CD14-positive monocyte (primary cell): ENCODE measurements at regions of chr18 and their contacts with region 1.

Region 1: DNA sequence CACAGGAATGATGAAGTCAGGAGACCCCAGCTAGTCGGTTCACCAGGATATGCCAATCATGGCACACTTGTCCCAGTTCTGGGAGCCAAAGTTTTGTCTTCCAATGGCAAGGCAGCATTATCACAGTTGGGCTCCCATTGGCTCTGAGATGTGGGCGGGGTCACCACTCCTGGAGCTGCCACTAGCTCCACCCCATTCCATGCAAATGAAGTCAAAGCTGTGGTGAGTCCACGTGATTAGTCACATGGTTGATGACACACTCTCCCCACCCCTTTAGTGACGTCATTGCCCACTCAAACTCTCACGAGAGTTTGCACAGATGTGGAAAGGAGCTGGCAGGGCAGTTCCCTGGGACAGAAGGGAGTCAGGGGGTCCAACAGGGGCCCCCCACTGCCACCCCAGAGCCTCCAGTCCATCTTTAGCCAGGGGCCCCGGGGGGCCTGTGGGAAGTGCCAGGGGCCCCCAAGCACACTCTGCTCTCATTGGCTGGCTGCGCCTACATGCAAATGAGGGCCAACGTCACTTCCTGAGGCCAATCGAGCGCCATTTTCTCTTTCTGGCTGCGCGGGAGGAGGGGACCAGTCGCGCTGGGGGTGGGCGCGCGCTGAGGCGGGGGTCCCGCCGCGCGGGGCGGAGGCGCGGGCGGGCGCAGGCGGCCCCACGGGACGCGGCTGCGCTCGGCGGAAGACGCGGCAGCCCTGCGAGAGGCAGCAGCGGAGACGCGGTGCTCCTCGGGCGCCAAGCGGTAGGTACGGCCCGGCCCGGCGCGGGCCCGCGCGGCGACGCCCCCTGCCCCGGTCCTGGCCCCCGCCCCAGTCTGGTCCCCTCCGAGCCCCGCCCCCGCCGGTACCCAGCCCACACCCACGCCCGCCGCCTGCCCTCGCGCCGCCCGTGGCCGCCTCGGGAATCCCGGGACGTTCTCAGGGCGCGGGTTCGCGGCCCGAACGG is at the start of gene ADNP2:
- DNase-seq: peak; percentile 88 to 95 (median 91)
- H3K4me3 ChIP-seq: peak within 1 kb of the TSS; percentile 62 to 82 (median 81)
- H3K4me3 Mint-ChIP-seq: peak within 1 kb of the TSS; percentile 88
- H3K27ac ChIP-seq: peak within 1 kb of the TSS; percentile 51 to 63
- H3K27ac Mint-ChIP-seq: peak within 1 kb of the TSS; percentile 72 to 93 (median 90)
- H3K4me1 ChIP-seq: peaks cover 11 to 17% of the 10 kb centered on the region in 2 donors
- H3K4me1 Mint-ChIP-seq: peaks cover 24% of the 10 kb centered on the region
- H3K27me3 ChIP-seq: no peaks in the 10 kb centered on the region
- H3K27me3 Mint-ChIP-seq: peaks cover 0 to 4% (median 2%) of the 10 kb centered on the region in 3 donors
- CTCF ChIP-seq: no peak
- polyA plus RNA-seq, gene ADNP2: 3.0 to 5.6 (median 3.6) TPM

Region 2: GRCh38 chr18:79679111-79679872 is 429.7 kb before region 1 on chr18 and contains the start of gene CTDP1:
- intact Hi-C with region 1: loop called in 1 of 2 experiments (anchors 5 kb)
- DNase-seq: peak; percentile 99
- H3K4me3 ChIP-seq: peak within 1 kb of the TSS; percentile 85 to 91 (median 86)
- H3K4me3 Mint-ChIP-seq: peak within 1 kb of the TSS; percentile 85 to 91
- H3K27ac ChIP-seq: peak within 1 kb of the TSS; percentile 91 to 97
- H3K27ac Mint-ChIP-seq: peak within 1 kb of the TSS; percentile 96 to 99 (median 98)
- H3K4me1 ChIP-seq: peaks cover 35 to 50% of the 10 kb centered on the region in 2 donors
- H3K4me1 Mint-ChIP-seq: peaks cover 58% of the 10 kb centered on the region
- H3K27me3 ChIP-seq: no peaks in the 10 kb centered on the region
- H3K27me3 Mint-ChIP-seq: peaks cover 0 to 4% (median 0%) of the 10 kb centered on the region in 3 donors
- CTCF ChIP-seq: no peak
- polyA plus RNA-seq, gene CTDP1: 9.1 to 13.9 (median 9.1) TPM

Region 3: GRCh38 chr18:79944126-79944741 is 164.8 kb before region 1 on chr18:
- intact Hi-C with region 1: loop called in 1 of 2 experiments (anchors 10 kb)
- DNase-seq: no peak
- H3K4me3 ChIP-seq: no peak overlapping the region
- H3K4me3 Mint-ChIP-seq: no peak overlapping the region
- H3K27ac ChIP-seq: no peak overlapping the region
- H3K27ac Mint-ChIP-seq: peak overlapping the region in 3 of 7 donors; percentile 35 to 66 (median 52)
- H3K4me1 ChIP-seq: peaks cover 6 to 11% of the 10 kb centered on the region in 2 donors
- H3K4me1 Mint-ChIP-seq: peaks cover 24% of the 10 kb centered on the region
- H3K27me3 ChIP-seq: no peaks in the 10 kb centered on the region
- H3K27me3 Mint-ChIP-seq: peaks cover 0 to 5% (median 0%) of the 10 kb centered on the region in 3 donors
- CTCF ChIP-seq: no peak

Region 4: DNA sequence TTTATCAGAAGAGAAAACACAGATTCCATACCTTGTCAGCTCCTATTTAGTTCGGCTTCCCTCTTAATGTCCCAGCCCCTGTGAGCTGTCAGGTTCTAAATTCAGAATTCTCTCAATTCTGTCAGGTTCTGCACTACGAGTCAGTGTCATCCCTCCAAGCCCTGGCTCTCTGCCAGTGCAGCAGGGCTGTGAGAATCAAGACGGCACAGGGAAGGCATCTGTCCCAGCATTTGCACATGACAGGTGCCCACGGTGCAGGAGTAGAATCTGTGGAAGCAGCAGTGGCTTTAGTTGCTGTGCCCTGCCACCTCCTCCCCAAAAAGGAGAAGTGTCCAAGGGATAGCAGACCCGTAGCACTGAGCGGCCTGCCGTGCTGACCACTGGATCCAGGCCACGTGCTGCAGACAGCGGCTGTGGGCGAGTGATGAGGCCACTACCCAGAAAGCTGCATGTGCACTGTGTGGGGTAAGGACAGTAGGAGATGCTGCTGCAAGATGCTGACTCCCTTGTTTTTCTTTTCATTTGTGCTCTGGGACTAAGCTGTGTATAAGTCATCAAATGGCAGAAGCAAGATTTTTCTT is 62.0 kb before region 1 on chr18:
- intact Hi-C with region 1: loop called in 1 of 2 experiments (anchors 5 kb)
- DNase-seq: no peak
- H3K4me3 ChIP-seq: no peak overlapping the region
- H3K4me3 Mint-ChIP-seq: no peak overlapping the region
- H3K27ac ChIP-seq: no peak overlapping the region
- H3K27ac Mint-ChIP-seq: peak overlapping the region in 1 of 7 donors; percentile 42
- H3K4me1 ChIP-seq: no peaks in the 10 kb centered on the region
- H3K4me1 Mint-ChIP-seq: no peaks in the 10 kb centered on the region
- H3K27me3 ChIP-seq: no peaks in the 10 kb centered on the region
- H3K27me3 Mint-ChIP-seq: peaks cover 0 to 2% (median 0%) of the 10 kb centered on the region in 3 donors
- CTCF ChIP-seq: no peak

Region 5: DNA sequence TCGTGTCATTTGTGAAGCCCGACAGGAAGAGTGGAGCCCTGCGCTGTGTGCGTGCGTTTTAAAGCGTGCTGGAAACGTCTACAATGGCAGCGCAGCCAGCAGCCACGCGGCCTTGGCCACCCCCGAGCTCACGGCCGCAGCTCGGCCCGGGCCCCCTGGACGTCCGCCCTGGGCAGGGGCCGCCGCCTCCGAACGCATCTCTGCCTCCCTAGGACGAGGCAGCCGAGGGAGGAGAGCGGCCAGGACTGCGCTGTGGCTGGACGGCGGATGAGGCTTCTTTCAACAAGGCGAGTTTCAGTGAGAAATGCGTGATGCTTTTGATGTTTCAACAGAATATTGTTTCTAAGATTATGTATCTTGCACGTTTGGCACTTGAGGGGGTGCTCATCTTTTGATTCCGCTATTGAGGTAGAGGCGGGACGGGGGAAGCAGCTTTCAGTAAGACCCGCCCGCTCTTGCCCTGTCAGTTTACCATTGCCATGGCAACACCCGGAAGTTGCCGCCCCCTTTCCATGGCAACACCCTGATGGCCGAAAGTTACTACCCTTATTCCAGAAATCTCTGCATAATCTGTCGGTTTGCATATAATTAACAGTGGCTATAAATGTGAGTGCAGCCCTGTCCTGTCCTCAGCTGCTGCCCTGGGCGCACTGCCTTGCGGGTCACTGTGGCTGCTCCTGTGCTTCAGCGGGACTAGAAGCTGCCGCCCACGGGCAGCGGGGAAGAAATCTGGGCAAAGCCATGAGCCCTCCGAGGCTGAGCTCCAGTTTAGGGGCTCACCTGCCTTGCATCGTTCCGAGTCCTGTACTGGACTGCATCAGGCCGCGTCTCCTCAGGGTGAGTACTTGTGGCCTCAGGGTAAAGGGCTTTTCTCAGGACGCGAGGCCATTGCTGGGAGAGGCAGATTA is 38.7 kb after region 1 on chr18:
- intact Hi-C with region 1: loop called (anchors 5 kb)
- DNase-seq: peak; percentile 62 to 75 (median 70)
- H3K4me3 ChIP-seq: peak overlapping the region; percentile 53 to 85 (median 54)
- H3K4me3 Mint-ChIP-seq: peak overlapping the region; percentile 85 to 93
- H3K27ac ChIP-seq: peak overlapping the region; percentile 27 to 57
- H3K27ac Mint-ChIP-seq: peak overlapping the region in 6 of 7 donors; percentile 72 to 89 (median 86)
- H3K4me1 ChIP-seq: peaks cover 24 to 29% of the 10 kb centered on the region in 2 donors
- H3K4me1 Mint-ChIP-seq: peaks cover 26% of the 10 kb centered on the region
- H3K27me3 ChIP-seq: peaks cover 0 to 11% of the 10 kb centered on the region in 2 donors
- H3K27me3 Mint-ChIP-seq: peaks cover 11 to 18% (median 12%) of the 10 kb centered on the region in 3 donors
- CTCF ChIP-seq: no peak

Region 6: GRCh38 chr18:80157708-80158343 is 48.8 kb after region 1 on chr18:
- intact Hi-C with region 1: no loop called
- DNase-seq: peak; percentile 38 to 51 (median 42)
- H3K4me3 ChIP-seq: no peak overlapping the region
- H3K4me3 Mint-ChIP-seq: peak overlapping the region in 1 of 2 donors; percentile 46
- H3K27ac ChIP-seq: no peak overlapping the region
- H3K27ac Mint-ChIP-seq: no peak overlapping the region
- H3K4me1 ChIP-seq: peaks cover 6 to 10% of the 10 kb centered on the region in 2 donors
- H3K4me1 Mint-ChIP-seq: peaks cover 2% of the 10 kb centered on the region
- H3K27me3 ChIP-seq: peaks cover 0 to 18% of the 10 kb centered on the region in 2 donors
- H3K27me3 Mint-ChIP-seq: peaks cover 7 to 36% (median 22%) of the 10 kb centered on the region in 3 donors
- CTCF ChIP-seq: peak; percentile 96